Body of pancreas (tissue), 4 donors: ENCODE measurements at regions of chr1 and their contacts with region 1.

Region 1: GRCh38 chr1:169546087-169546995 is 39.9 kb downstream of the F5 start:
- DNase-seq: peak; percentile 56 to 78 (median 68)
- ATAC-seq: peak; percentile 84
- H3K4me3 ChIP-seq: no peak overlapping the region
- H3K27ac ChIP-seq: no peak overlapping the region
- H3K4me1 ChIP-seq: no peaks in the 10 kb centered on the region
- H3K27me3 ChIP-seq: no peaks in the 10 kb centered on the region
- CTCF ChIP-seq: peak; percentile 69 to 92 (median 85)
- POLR2A ChIP-seq: no peak

Region 2: DNA sequence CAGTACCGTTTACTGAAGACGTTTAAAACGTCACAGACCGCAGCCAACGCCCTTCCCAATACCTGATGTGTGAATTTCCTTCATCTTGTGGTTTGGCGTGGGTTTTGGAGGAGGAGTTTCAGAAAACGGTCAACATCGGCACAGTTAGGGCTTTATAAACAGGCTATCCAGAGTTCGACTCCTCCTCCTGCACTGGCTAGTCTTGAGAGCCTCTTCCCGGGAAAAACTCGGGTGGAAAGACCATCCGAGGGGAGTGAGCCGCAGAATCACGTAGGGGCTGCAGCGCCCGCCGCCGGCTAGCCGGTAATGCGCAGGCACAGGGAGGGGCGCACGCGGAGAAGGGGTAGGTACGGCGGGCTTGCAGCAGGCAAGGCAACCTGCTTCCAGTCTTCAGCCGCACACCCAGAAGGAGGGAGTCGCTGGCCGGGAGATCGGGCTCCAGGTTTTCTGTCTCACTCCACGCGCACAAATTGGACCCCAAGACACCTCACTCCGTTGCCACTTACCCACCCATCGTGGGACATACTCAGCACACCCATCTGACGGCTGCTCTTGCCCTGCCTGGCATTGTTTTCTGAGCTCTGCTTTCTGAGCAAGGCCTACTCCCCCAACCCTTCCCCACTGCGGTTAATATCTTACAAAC is 86.0 kb before region 1 on chr1:
- intact Hi-C with region 1: loop called (anchors 5 kb)
- DNase-seq: no peak
- ATAC-seq: peak; percentile 27
- H3K4me3 ChIP-seq: no peak overlapping the region
- H3K27ac ChIP-seq: no peak overlapping the region
- H3K4me1 ChIP-seq: no peaks in the 10 kb centered on the region
- H3K27me3 ChIP-seq: no peaks in the 10 kb centered on the region
- CTCF ChIP-seq: no peak
- POLR2A ChIP-seq: no peak

Region 3: GRCh38 chr1:169711469-169712281 is 165.3 kb after region 1 on chr1 and contains the start of gene SELL:
- intact Hi-C with region 1: loop called (anchors 10 kb)
- DNase-seq: peak; percentile 64 to 73 (median 68)
- ATAC-seq: peak; percentile 96
- H3K4me3 ChIP-seq: no peak within 1 kb of the TSS
- H3K27ac ChIP-seq: no peak within 1 kb of the TSS
- H3K4me1 ChIP-seq: peaks cover 9% of the 10 kb centered on the region
- H3K27me3 ChIP-seq: no peaks in the 10 kb centered on the region
- CTCF ChIP-seq: peak; percentile 54 to 84 (median 76)
- POLR2A ChIP-seq: no peak
- total RNA-seq, gene SELL: 0.26 TPM in 1 of 2 donors, not detected in the other